ENCODE measurements at regions of chr17 and their contacts with region 1.

Region 1: GRCh38 chr17:64709481-64709880 is 47.4 kb upstream of the SMURF2 start:
- DNase-seq: no peak
- H3K4me3 Mint-ChIP-seq: peak overlapping the region; percentile 20
- H3K27ac Mint-ChIP-seq: peak overlapping the region; percentile 88
- H3K4me1 Mint-ChIP-seq: peaks cover 72% of the 10 kb centered on the region
- H3K27me3 Mint-ChIP-seq: no peaks in the 10 kb centered on the region

Region 2: GRCh38 chr17:64661976-64662773 is 47.3 kb before region 1 on chr17 and contains the start of gene SMURF2:
- CTCF ChIA-PET with region 1: no interaction called
- POLR2A ChIA-PET with region 1: interaction called, 14 read pairs
- DNase-seq: peak; percentile 83
- H3K4me3 Mint-ChIP-seq: peak within 1 kb of the TSS; percentile 92
- H3K27ac Mint-ChIP-seq: peak within 1 kb of the TSS; percentile 83
- H3K4me1 Mint-ChIP-seq: peaks cover 28% of the 10 kb centered on the region
- H3K27me3 Mint-ChIP-seq: no peaks in the 10 kb centered on the region
- total RNA-seq, gene SMURF2: 14.6 to 14.8 TPM

Measured in activated CD4-positive, alpha-beta memory T cell treated with anti-CD3 and anti-CD28 coated beads, Interleukin-2, amount 10 ng/mL, durations not matched to agents 7 days and 5 days (primary cell).